H1 (cell line): ENCODE measurements at regions of chr7 and their contacts with region 1.

Region 1: DNA sequence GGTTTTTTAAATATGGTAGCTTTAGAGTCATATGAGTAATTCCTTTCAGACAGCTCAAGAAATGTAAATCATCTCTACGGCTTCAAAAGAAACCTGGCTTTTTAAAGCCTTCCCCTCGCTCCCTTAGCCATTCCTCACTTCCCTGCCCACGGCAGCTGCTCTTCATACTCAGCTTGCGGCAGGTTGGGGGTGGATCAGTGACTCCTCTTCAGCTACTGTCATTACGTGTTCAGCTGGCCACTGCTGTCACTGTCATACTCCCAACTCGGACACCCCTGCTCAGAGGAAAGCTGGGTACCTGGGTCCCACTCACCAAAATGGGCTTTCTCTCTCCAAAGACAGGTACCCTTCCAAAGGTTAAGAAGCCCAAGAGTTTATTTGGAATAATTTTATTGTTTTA is 6.6 kb downstream of the YWHAG start:
- DNase-seq: no peak
- H3K4me3 ChIP-seq: no peak overlapping the region
- H3K27ac ChIP-seq: no peak overlapping the region
- H3K4me1 ChIP-seq: peaks cover 0 to 3% (median 1%) of the 10 kb centered on the region in 4 experiments; a peak in 3 of 7 replicates
- H3K27me3 ChIP-seq: no peaks in the 10 kb centered on the region
- CTCF ChIP-seq: no peak
- EP300 ChIP-seq: no peak
- POLR2A ChIP-seq: no peak
- RAD21 ChIP-seq: no peak

Region 2: GRCh38 chr7:76191783-76192275 is 160.4 kb before region 1 on chr7:
- CTCF ChIA-PET with region 1: no interaction called
- POLR2A ChIA-PET with region 1: no interaction called
- DNase-seq: peak; percentile 34 to 71
- H3K4me3 ChIP-seq: no peak overlapping the region
- H3K27ac ChIP-seq: no peak overlapping the region
- H3K4me1 ChIP-seq: peaks cover 0 to 7% (median 4%) of the 10 kb centered on the region in 4 experiments; a peak in 5 of 7 replicates
- H3K27me3 ChIP-seq: no peaks in the 10 kb centered on the region
- CTCF ChIP-seq: no peak
- EP300 ChIP-seq: no peak
- POLR2A ChIP-seq: peak in 1 of 2 experiments; percentile 46; a peak in 1 of 3 replicates
- RAD21 ChIP-seq: no peak

Region 3: GRCh38 chr7:76333511-76334101 is 18.6 kb before region 1 on chr7:
- CTCF ChIA-PET with region 1: interaction called, 10 read pairs
- POLR2A ChIA-PET with region 1: interaction called, 249 read pairs
- DNase-seq: no peak
- H3K4me3 ChIP-seq: no peak overlapping the region
- H3K27ac ChIP-seq: no peak overlapping the region
- H3K4me1 ChIP-seq: peaks cover 0 to 4% (median 2%) of the 10 kb centered on the region in 4 experiments; a peak in 3 of 7 replicates
- H3K27me3 ChIP-seq: no peaks in the 10 kb centered on the region
- CTCF ChIP-seq: no peak
- EP300 ChIP-seq: no peak
- POLR2A ChIP-seq: no peak
- RAD21 ChIP-seq: no peak